ENCODE measurements at regions of chr22 and their contacts with region 1.

Region 1: GRCh38 chr22:23893943-23894709 is at the start of gene MIF:
- DNase-seq: peak; percentile 97
- ATAC-seq: peak; percentile 91
- H3K4me3 Mint-ChIP-seq: peak within 1 kb of the TSS; percentile 97
- H3K27ac Mint-ChIP-seq: peak within 1 kb of the TSS; percentile 99
- H3K4me1 Mint-ChIP-seq: peaks cover 46% of the 10 kb centered on the region
- H3K27me3 Mint-ChIP-seq: no peaks in the 10 kb centered on the region
- total RNA-seq, gene MIF: 1,002 to 1,009 TPM

Region 2: DNA sequence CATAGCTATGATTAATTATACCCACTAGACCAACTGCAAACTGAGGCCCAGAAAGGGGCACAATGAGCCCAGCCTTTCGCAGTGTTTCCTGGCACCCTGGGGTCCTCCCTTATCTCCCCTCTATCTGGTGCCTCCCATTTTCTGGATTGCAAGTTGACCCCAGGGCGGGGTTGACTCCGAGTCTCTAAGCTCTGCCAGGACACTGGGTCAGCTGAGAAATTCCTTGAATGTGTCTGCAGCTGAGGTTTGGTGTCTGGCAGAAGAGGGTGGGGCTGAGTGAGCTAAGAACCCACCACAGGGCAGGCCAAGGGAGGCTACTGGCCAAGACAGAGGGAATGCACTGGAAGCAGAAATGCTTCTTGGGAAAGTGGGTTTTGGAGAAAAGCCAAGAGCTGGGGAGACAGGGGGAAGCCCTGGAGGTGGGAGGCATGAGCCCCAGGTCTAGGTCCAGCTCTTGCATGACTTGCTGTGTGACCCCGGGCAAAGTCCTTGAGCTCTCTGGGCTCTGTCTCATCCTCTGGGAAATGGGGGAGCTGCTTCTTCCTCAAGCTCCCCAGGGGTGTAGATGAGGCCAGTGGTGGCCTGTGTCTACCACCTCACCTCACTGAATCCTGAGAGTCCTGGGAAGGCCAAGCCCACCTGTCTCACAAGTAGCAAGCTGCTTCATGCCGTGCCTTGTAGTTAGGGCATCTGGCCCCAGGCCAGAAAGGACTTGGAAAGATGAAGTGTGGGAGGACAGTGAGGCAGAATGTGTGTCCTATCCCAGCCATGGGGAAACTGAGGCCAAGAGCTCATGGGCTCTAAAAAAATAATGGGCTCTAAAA is 119.2 kb before region 1 on chr22:
- CTCF ChIA-PET with region 1: no interaction called
- POLR2A ChIA-PET with region 1: no interaction called
- DNase-seq: no peak
- ATAC-seq: no peak
- H3K4me3 Mint-ChIP-seq: no peak overlapping the region
- H3K27ac Mint-ChIP-seq: no peak overlapping the region
- H3K4me1 Mint-ChIP-seq: peaks cover 20% of the 10 kb centered on the region
- H3K27me3 Mint-ChIP-seq: peaks cover 8% of the 10 kb centered on the region

Region 3: GRCh38 chr22:23857606-23858483 is 36.3 kb before region 1 on chr22 and contains the start of gene SLC2A11:
- CTCF ChIA-PET with region 1: interaction called, 54 read pairs
- POLR2A ChIA-PET with region 1: interaction called, 21 read pairs
- DNase-seq: peak; percentile 97
- ATAC-seq: peak; percentile 99
- H3K4me3 Mint-ChIP-seq: peak within 1 kb of the TSS; percentile 89
- H3K27ac Mint-ChIP-seq: peak within 1 kb of the TSS; percentile 88
- H3K4me1 Mint-ChIP-seq: peaks cover 20% of the 10 kb centered on the region
- H3K27me3 Mint-ChIP-seq: no peaks in the 10 kb centered on the region
- total RNA-seq, gene SLC2A11: 6.7 to 7.9 TPM

Region 4: GRCh38 chr22:23878219-23878618 is 15.9 kb before region 1 on chr22:
- CTCF ChIA-PET with region 1: interaction called, 13 read pairs
- POLR2A ChIA-PET with region 1: interaction called, 10 read pairs
- DNase-seq: no peak
- ATAC-seq: no peak
- H3K4me3 Mint-ChIP-seq: no peak overlapping the region
- H3K27ac Mint-ChIP-seq: no peak overlapping the region
- H3K4me1 Mint-ChIP-seq: no peaks in the 10 kb centered on the region
- H3K27me3 Mint-ChIP-seq: no peaks in the 10 kb centered on the region

Region 5: GRCh38 chr22:23904573-23905260 is 10.6 kb after region 1 on chr22:
- CTCF ChIA-PET with region 1: interaction called, 20 read pairs
- POLR2A ChIA-PET with region 1: interaction called, 10 read pairs
- DNase-seq: no peak
- ATAC-seq: no peak
- H3K4me3 Mint-ChIP-seq: no peak overlapping the region
- H3K27ac Mint-ChIP-seq: no peak overlapping the region
- H3K4me1 Mint-ChIP-seq: no peaks in the 10 kb centered on the region
- H3K27me3 Mint-ChIP-seq: no peaks in the 10 kb centered on the region

Region 6: DNA sequence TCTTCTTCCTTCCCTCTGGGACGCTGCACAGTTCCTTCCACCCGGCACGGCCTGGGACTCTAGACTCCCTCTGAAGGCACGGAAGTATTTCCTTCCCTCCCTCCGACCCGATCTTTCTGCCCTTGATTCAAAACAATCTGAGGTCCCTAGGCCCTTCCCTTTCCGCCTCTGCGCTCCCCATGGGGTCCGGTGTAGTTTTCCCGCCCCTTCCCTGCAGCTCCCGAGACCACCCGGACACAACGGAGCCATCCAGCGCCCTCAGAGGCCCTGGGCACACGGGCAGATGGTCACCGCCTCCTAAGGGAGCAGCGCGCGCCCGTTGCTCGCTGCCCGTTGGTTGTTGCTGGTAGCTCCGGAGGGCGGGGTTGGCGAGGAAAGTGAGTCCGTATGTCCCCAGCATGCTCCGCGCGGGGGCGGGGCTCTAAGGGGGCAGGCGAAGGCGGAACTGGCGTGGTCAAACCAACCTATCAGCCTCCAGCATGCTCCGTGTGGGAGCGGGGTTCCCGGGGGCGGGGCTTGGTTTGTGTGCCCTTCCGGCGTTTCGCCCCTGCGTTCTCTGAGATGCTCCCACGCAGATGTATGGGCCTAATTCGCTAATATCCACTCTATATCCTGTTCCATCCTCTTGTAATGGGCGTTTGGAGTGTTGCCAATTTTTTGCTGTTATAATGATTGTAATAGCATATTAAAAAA is 19.7 kb after region 1 on chr22:
- CTCF ChIA-PET with region 1: interaction called, 33 read pairs
- POLR2A ChIA-PET with region 1: interaction called, 39 read pairs
- DNase-seq: peak; percentile 100
- ATAC-seq: peak; percentile 100
- H3K4me3 Mint-ChIP-seq: peak overlapping the region; percentile 97
- H3K27ac Mint-ChIP-seq: peak overlapping the region; percentile 99
- H3K4me1 Mint-ChIP-seq: peaks cover 39% of the 10 kb centered on the region
- H3K27me3 Mint-ChIP-seq: no peaks in the 10 kb centered on the region

Region 7: GRCh38 chr22:24088816-24089215 is 194.7 kb after region 1 on chr22:
- CTCF ChIA-PET with region 1: no interaction called
- POLR2A ChIA-PET with region 1: no interaction called
- DNase-seq: no peak
- ATAC-seq: no peak
- H3K4me3 Mint-ChIP-seq: no peak overlapping the region
- H3K27ac Mint-ChIP-seq: no peak overlapping the region
- H3K4me1 Mint-ChIP-seq: peaks cover 16% of the 10 kb centered on the region
- H3K27me3 Mint-ChIP-seq: no peaks in the 10 kb centered on the region